Left ventricle myocardium inferior (tissue), 1 donor: ENCODE measurements at regions of chr4 and their contacts with region 1.

Region 1: DNA sequence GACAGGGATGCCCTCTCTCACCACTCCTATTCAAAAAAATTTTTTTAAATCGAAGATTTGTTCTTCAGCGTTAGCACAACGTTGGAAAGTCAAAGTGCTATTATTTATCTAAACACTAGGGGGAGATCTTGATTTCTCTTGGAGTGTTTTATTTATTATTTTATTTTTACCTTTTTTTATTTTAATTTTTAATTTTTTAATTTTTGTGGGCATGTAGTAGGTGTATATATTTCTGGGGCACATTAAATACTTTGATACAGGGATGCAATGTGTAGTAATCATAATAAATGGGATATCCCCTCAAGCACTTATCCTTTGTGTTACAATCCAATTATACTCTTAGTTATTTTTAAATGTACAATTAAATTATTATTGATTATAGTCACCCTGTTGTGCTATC is 37.4 kb upstream of the SLC10A4 start:
- DNase-seq: no peak
- H3K4me3 ChIP-seq: no peak overlapping the region
- H3K27ac ChIP-seq: no peak overlapping the region
- H3K4me1 ChIP-seq: no peaks in the 10 kb centered on the region
- H3K27me3 ChIP-seq: no peaks in the 10 kb centered on the region
- CTCF ChIP-seq: peak; percentile 70

Region 2: GRCh38 chr4:48963042-48963679 is 517.5 kb after region 1 on chr4:
- intact Hi-C with region 1: loop called (anchors 5 kb)
- DNase-seq: peak; percentile 17
- H3K4me3 ChIP-seq: no peak overlapping the region
- H3K27ac ChIP-seq: no peak overlapping the region
- H3K4me1 ChIP-seq: peaks cover 3% of the 10 kb centered on the region
- H3K27me3 ChIP-seq: no peaks in the 10 kb centered on the region
- CTCF ChIP-seq: peak; percentile 95